Pancreas (tissue), 10 donors: ENCODE measurements at regions of chr13 and their contacts with region 1.

Region 1: DNA sequence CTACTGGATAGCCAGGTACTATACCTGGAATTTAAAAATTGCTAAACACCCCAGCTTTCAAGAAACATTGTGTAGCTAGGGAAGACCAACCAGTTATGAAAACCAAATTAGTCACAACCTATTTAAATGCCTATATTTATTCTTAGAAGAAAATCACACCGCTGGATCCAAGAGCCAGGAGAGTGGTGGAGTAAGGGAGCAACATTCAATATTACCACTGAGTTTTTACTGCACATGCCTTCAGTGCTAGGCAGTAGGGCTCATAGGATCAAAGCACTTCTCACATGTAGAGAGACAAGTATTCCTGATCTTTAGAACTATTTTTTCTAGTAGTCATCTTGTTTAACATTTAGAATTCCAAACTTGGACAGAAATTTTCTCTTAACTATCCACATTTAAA is 11.2 kb downstream of the ITM2B start:
- DNase-seq: no peak
- ATAC-seq: no peak
- H3K4me3 ChIP-seq: no peak overlapping the region
- H3K27ac ChIP-seq: no peak overlapping the region
- H3K4me1 ChIP-seq: peaks cover 24 to 31% (median 31%) of the 10 kb centered on the region in 3 donors
- H3K27me3 ChIP-seq: no peaks in the 10 kb centered on the region
- CTCF ChIP-seq: no peak

Region 2: GRCh38 chr13:48291730-48292129 is 47.6 kb after region 1 on chr13:
- intact Hi-C with region 1: loop called in 1 of 3 experiments (anchors 10 kb)
- DNase-seq: no peak
- ATAC-seq: peak in 3 of 4 donors; percentile 65 to 90 (median 72)
- H3K4me3 ChIP-seq: no peak overlapping the region
- H3K27ac ChIP-seq: no peak overlapping the region
- H3K4me1 ChIP-seq: peaks cover 0 to 5% (median 0%) of the 10 kb centered on the region in 3 donors
- H3K27me3 ChIP-seq: no peaks in the 10 kb centered on the region
- CTCF ChIP-seq: no peak